Activated CD8-positive, alpha-beta T cell treated with anti-CD3 and anti-CD28 coated beads for 36 hours (primary cell): ENCODE measurements at regions of chr3 and their contacts with region 1.

Region 1: DNA sequence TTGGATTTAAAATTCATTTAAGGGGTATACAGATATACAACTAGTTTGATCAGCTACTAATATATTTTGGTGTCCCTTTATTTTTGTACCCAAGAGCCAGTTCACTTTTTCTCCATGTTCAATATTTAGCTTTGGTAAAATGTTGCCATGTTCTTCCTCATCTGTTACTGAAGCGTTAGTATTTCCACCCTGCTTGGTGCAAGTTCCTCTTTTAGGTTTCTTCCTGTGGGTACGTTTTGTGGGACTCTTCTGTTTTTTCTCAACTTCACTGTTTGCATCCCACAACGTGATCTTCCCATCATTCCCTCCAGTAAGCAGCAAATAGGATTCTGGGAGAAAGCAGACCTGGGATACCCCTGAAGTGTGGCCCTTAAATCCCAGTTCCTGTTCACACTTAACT is 14.1 kb downstream of the WDR53 start:
- DNase-seq: no peak
- ATAC-seq: no peak
- H3K4me3 Mint-ChIP-seq: no peak overlapping the region
- H3K27ac Mint-ChIP-seq: no peak overlapping the region
- H3K4me1 Mint-ChIP-seq: peaks cover 4% of the 10 kb centered on the region
- H3K27me3 Mint-ChIP-seq: no peaks in the 10 kb centered on the region
- CTCF ChIP-seq: no peak

Region 2: DNA sequence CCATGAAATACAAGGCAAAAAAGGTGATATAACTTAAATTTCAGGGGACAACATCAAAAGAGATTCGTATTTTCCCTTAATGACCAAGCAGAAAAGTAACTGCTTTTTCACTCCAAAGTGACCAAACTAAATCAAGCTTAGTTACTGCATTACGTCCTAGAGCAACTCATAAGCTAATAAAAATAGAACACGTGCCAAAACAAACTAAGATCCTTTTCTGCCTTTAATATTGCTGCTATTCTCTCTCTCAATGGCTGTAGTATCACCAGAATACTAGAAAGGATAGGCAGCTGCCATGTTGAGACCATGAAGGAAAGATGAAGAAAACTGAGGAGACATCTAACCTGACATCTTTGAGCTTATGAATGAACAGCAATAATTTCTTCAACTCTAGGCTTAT is 165.2 kb before region 1 on chr3:
- CTCF ChIA-PET with region 1: no interaction called
- POLR2A ChIA-PET with region 1: no interaction called
- intact Hi-C with region 1: no loop called
- DNase-seq: no peak
- ATAC-seq: no peak
- H3K4me3 Mint-ChIP-seq: no peak overlapping the region
- H3K27ac Mint-ChIP-seq: no peak overlapping the region
- H3K4me1 Mint-ChIP-seq: peaks cover 1% of the 10 kb centered on the region
- H3K27me3 Mint-ChIP-seq: no peaks in the 10 kb centered on the region
- CTCF ChIP-seq: no peak

Region 3: GRCh38 chr3:196537319-196537984 is 16.8 kb before region 1 on chr3:
- CTCF ChIA-PET with region 1: interaction called, 12 read pairs
- POLR2A ChIA-PET with region 1: no interaction called
- intact Hi-C with region 1: no loop called
- DNase-seq: peak; percentile 80
- ATAC-seq: no peak
- H3K4me3 Mint-ChIP-seq: no peak overlapping the region
- H3K27ac Mint-ChIP-seq: no peak overlapping the region
- H3K4me1 Mint-ChIP-seq: no peaks in the 10 kb centered on the region
- H3K27me3 Mint-ChIP-seq: peaks cover 1% of the 10 kb centered on the region
- CTCF ChIP-seq: peak; percentile 86

Region 4: GRCh38 chr3:196568246-196569002 is 14.2 kb after region 1 on chr3 and contains the starts of genes FBXO45 and WDR53:
- CTCF ChIA-PET with region 1: interaction called, 7 read pairs
- POLR2A ChIA-PET with region 1: interaction called, 25 read pairs
- intact Hi-C with region 1: no loop called
- DNase-seq: peak; percentile 96
- ATAC-seq: peak; percentile 96
- H3K4me3 Mint-ChIP-seq: peak within 1 kb of the TSS; percentile 84
- H3K27ac Mint-ChIP-seq: peak within 1 kb of the TSS; percentile 97
- H3K4me1 Mint-ChIP-seq: peaks cover 31% of the 10 kb centered on the region
- H3K27me3 Mint-ChIP-seq: no peaks in the 10 kb centered on the region
- CTCF ChIP-seq: no peak
- total RNA-seq, gene FBXO45: 18.2 TPM
- total RNA-seq, gene WDR53: 16.2 to 17.2 TPM